ENCODE measurements at regions of chr5 and their contacts with region 1.

Region 1: GRCh38 chr5:42057254-42057690 is 132.2 kb downstream of the FBXO4 start:
- DNase-seq: peak; percentile 72
- ATAC-seq: peak; percentile 97
- H3K4me3 Mint-ChIP-seq: no peak overlapping the region
- H3K27ac Mint-ChIP-seq: no peak overlapping the region
- H3K4me1 Mint-ChIP-seq: peaks cover 3% of the 10 kb centered on the region; the same call in 1 of the 2 replicates
- H3K27me3 Mint-ChIP-seq: no peaks in the 10 kb centered on the region
- CTCF ChIP-seq: peak; percentile 64; the same call in 1 of the 2 replicates

Region 2: DNA sequence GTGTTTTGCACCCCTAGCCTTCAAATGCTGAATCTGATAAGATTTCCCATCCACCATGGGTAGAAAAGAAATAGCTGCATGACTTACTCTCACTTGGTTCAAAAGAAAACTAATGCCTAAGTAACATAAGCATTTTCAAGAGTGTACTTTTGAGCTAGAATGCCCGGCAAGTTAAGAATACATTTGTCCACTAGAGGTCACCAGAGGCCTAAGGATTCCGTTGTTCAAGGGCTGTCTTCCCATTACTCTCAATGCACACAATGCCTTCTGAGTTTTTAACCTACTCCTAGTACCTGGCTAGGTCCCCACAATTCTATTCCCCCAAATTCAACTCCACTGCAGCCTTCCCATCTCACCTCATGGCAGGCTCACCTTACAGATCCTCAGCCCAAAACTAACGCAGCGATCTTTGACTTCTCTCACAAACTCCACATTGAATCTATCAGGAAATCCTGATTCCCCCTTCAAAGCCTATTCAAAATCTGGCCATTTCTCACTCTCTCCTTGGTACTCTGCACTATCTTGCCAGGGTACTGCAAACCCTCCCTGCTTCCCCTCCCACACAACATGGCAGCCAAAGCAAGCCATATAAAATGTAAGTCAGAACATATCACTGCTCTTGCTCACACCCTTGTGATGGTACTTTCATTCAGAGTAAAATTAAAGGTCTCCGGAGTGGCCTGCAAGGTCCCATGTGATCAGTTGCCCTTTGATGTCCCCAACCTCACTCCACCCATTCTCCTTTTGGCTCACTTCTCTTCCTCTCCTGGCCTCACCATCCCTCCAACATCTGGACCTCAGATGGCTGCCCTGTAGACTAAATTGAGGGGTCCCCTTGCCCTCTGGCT is 200.4 kb before region 1 on chr5:
- CTCF ChIA-PET with region 1: interaction called, 34 read pairs
- POLR2A ChIA-PET with region 1: no interaction called
- DNase-seq: peak; percentile 30
- ATAC-seq: peak; percentile 98
- H3K4me3 Mint-ChIP-seq: no peak overlapping the region
- H3K27ac Mint-ChIP-seq: no peak overlapping the region
- H3K4me1 Mint-ChIP-seq: no peaks in the 10 kb centered on the region
- H3K27me3 Mint-ChIP-seq: no peaks in the 10 kb centered on the region
- CTCF ChIP-seq: peak; percentile 40

Region 3: DNA sequence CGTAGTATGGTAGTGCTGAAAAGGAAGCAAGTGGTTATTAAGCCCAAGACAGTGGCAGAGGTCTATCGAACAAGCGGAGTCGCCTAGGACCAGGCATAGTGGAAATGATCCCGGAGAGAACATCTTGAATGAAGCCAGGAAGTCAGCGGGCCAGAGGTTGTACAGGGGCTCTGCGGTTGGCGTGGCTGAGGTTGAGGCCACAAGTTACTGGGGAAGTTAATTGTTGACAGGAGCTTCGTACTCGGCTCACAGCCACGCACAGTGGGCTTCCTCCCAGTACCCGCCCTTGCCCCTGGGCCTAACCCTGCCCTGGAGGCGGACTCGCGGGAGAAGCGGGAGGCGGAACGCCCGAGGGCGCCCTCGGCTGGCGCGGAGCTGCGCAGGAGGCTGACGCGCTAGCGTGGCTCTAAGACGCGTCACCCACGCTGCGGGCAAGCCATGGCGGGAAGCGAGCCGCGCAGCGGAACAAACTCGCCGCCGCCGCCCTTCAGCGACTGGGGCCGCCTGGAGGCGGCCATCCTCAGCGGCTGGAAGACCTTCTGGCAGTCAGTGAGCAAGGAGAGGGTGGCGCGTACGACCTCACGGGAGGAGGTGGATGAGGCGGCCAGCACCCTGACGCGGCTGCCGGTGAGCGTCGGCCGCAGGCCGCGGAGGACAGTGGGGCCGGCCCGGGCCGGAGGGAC is 132.3 kb before region 1 on chr5 and contains the start of gene FBXO4:
- CTCF ChIA-PET with region 1: interaction called, 12 read pairs
- POLR2A ChIA-PET with region 1: no interaction called
- DNase-seq: peak; percentile 66
- ATAC-seq: peak; percentile 90
- H3K4me3 Mint-ChIP-seq: peak within 1 kb of the TSS; percentile 77
- H3K27ac Mint-ChIP-seq: no peak within 1 kb of the TSS
- H3K4me1 Mint-ChIP-seq: peaks cover 9% of the 10 kb centered on the region
- H3K27me3 Mint-ChIP-seq: no peaks in the 10 kb centered on the region
- CTCF ChIP-seq: no peak
- total RNA-seq, gene FBXO4: 0.72 to 2.1 TPM (median 1.9 TPM) in 3 replicates

Region 4: DNA sequence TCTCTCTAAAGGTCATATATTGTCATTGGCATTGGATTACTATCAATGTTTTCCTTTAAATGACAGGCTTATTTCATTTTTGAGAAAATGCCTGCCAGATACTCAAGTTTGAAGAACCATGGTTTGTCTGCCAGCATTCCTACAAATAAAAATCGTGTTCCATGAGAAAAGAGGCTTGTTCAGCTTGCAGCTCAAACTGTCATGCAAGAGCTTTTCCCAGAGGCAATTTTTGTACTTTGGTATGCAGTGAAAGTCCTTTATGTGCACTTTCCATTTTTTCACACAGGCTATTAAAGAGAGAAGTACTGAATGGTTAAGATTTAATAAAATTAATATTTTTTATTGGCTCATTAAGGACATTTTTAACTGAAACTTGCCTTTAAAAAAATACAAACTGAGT is 21.7 kb before region 1 on chr5:
- CTCF ChIA-PET with region 1: interaction called, 11 read pairs
- POLR2A ChIA-PET with region 1: no interaction called
- DNase-seq: no peak
- ATAC-seq: no peak
- H3K4me3 Mint-ChIP-seq: no peak overlapping the region
- H3K27ac Mint-ChIP-seq: no peak overlapping the region
- H3K4me1 Mint-ChIP-seq: peaks cover 16% of the 10 kb centered on the region
- H3K27me3 Mint-ChIP-seq: no peaks in the 10 kb centered on the region
- CTCF ChIP-seq: no peak

Region 5: GRCh38 chr5:42074353-42074752 is 17.1 kb after region 1 on chr5:
- CTCF ChIA-PET with region 1: interaction called, 12 read pairs
- POLR2A ChIA-PET with region 1: no interaction called
- DNase-seq: no peak
- ATAC-seq: no peak
- H3K4me3 Mint-ChIP-seq: no peak overlapping the region
- H3K27ac Mint-ChIP-seq: no peak overlapping the region
- H3K4me1 Mint-ChIP-seq: peaks cover 5% of the 10 kb centered on the region
- H3K27me3 Mint-ChIP-seq: no peaks in the 10 kb centered on the region; the same call in 1 of the 2 replicates
- CTCF ChIP-seq: no peak